IMR-90 (cell line): ENCODE measurements at regions of chrX and their contacts with region 1.

Region 1: DNA sequence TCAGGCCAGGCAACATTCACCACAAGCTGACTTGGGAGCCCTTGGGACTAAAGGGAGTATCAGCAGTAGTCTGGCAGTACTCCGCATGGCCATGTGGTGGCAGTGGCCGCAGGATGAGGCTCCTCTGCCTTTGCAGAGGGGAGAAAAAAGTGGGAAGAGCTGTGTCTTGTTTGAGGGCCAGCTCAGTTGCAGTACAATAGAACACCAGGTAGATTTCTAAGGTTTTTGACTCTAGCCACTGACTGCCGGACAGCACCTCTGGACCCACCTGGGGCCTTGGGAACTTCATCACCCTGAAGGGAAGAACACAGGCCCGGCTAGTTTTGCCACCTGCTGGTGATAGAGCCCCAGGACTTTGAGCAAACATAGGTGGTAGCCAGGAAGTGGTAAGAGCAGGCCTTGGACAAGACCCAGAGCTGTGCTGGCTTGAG is 414.6 kb downstream of the OPHN1 start:
- DNase-seq: peak; percentile 32
- ATAC-seq: peak; percentile 72
- H3K4me3 ChIP-seq: no peak overlapping the region
- H3K27ac ChIP-seq: no peak overlapping the region
- H3K4me1 ChIP-seq: no peaks in the 10 kb centered on the region
- H3K27me3 ChIP-seq: peaks cover 2% of the 10 kb centered on the region; the same call in 1 of the 2 replicates
- CTCF ChIP-seq: peak; percentile 42
- POLR2A ChIP-seq: no peak
- RAD21 ChIP-seq: peak; percentile 38

Region 2: GRCh38 chrX:68146054-68146453 is 127.4 kb after region 1 on chrX:
- CTCF ChIA-PET with region 1: interaction called, 8 read pairs
- POLR2A ChIA-PET with region 1: no interaction called
- dilution Hi-C with region 1: no loop called
- in situ Hi-C with region 1: no loop called
- intact Hi-C with region 1: loop called (anchors 1 kb)
- DNase-seq: peak; percentile 62
- ATAC-seq: peak; percentile 93
- H3K4me3 ChIP-seq: no peak overlapping the region
- H3K27ac ChIP-seq: no peak overlapping the region
- H3K4me1 ChIP-seq: no peaks in the 10 kb centered on the region
- H3K27me3 ChIP-seq: peaks cover 1% of the 10 kb centered on the region; the same call in 1 of the 2 replicates
- CTCF ChIP-seq: peak; percentile 52
- POLR2A ChIP-seq: no peak
- RAD21 ChIP-seq: peak; percentile 61